ENCODE measurements at regions of chr5 and their contacts with region 1.

Region 1: DNA sequence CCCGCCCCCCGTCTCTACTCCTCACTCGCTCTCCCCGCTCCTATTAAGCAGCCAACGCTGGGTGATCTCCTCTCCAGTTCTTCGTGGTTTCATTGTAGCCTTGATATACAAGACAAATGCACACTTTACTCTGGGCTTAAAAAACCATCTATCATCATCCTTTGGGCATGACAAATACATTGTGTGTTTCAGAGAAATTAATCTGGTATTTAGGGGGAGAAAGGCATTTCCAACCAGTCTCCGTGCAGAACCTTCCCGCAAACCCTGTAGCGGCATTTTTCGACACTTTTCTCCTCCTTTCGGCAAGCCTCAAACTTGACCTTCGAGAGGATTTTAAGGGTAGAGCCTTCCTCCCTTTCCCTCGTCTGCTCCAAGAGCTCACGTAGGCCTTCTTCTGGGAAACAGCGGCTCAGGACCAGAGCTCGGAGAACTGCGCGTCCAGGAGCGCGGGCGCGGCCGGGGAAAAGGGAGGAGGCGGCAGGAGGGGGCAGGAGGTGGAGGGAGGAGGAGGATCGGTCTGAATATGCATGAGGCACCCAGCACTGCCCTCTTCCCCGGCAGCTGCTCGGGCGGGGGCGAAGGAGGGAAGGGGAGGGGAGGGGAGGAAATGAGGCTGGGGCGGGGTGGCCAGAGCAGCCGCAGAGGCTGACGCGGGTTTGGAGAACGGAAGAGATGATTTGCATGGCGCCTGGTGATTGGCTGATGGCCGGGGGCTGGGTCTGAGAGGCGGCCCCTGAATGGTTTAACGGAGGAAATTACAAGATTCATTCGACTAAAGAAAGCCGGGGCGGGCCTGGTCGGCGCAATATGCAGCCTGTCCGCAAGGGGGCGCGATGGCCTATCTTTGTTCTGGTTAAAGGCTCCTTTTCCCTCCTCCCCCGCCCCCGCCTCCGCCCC is 127.5 kb downstream of the TMEM161B start:
- DNase-seq: peak; percentile 90 to 95
- ATAC-seq: peak; percentile 86 to 95 (median 92)
- H3K4me3 ChIP-seq: peak overlapping the region; percentile 45
- H3K4me3 Mint-ChIP-seq: no peak overlapping the region
- H3K27ac ChIP-seq: no peak overlapping the region
- H3K27ac Mint-ChIP-seq: no peak overlapping the region
- H3K4me1 ChIP-seq: peaks cover 50% of the 10 kb centered on the region
- H3K4me1 Mint-ChIP-seq: peaks cover 15 to 19% of the 10 kb centered on the region in 2 donors
- H3K27me3 ChIP-seq: peaks cover 61% of the 10 kb centered on the region
- H3K27me3 Mint-ChIP-seq: peaks cover 17 to 19% of the 10 kb centered on the region in 2 donors
- CTCF ChIP-seq: peak; percentile 68

Region 2: GRCh38 chr5:87412630-87413342 is 728.3 kb before region 1 on chr5 and contains the start of gene CCNH:
- intact Hi-C with region 1: loop called (anchors 10 kb)
- DNase-seq: peak; percentile 91 to 99
- ATAC-seq: peak; percentile 93 to 99 (median 96)
- H3K4me3 ChIP-seq: peak within 1 kb of the TSS; percentile 94
- H3K4me3 Mint-ChIP-seq: peak within 1 kb of the TSS; percentile 97
- H3K27ac ChIP-seq: peak within 1 kb of the TSS; percentile 97
- H3K27ac Mint-ChIP-seq: peak within 1 kb of the TSS; percentile 90 to 99
- H3K4me1 ChIP-seq: peaks cover 6% of the 10 kb centered on the region
- H3K4me1 Mint-ChIP-seq: peaks cover 40 to 44% of the 10 kb centered on the region in 2 donors
- H3K27me3 ChIP-seq: no peaks in the 10 kb centered on the region
- H3K27me3 Mint-ChIP-seq: peaks cover 10 to 25% of the 10 kb centered on the region in 2 donors
- CTCF ChIP-seq: no peak
- total RNA-seq, gene CCNH: 171 to 305 (median 268) TPM

Region 3: GRCh38 chr5:88203981-88204750 is 63.1 kb after region 1 on chr5:
- intact Hi-C with region 1: loop called (anchors 1 kb)
- DNase-seq: peak; percentile 51 to 80
- ATAC-seq: peak; percentile 92 to 95 (median 94)
- H3K4me3 ChIP-seq: peak overlapping the region; percentile 1
- H3K4me3 Mint-ChIP-seq: peak overlapping the region; percentile 83
- H3K27ac ChIP-seq: peak overlapping the region; percentile 78
- H3K27ac Mint-ChIP-seq: peak overlapping the region; percentile 85 to 90
- H3K4me1 ChIP-seq: peaks cover 7% of the 10 kb centered on the region
- H3K4me1 Mint-ChIP-seq: peaks cover 14% of the 10 kb centered on the region in 2 donors
- H3K27me3 ChIP-seq: no peaks in the 10 kb centered on the region
- H3K27me3 Mint-ChIP-seq: no peaks in the 10 kb centered on the region
- CTCF ChIP-seq: no peak

Region 4: GRCh38 chr5:88251048-88251711 is 110.1 kb after region 1 on chr5:
- intact Hi-C with region 1: loop called (anchors 5 kb)
- DNase-seq: peak in 1 of 2 donors; percentile 30
- ATAC-seq: peak; percentile 69 to 92 (median 88)
- H3K4me3 ChIP-seq: no peak overlapping the region
- H3K4me3 Mint-ChIP-seq: no peak overlapping the region
- H3K27ac ChIP-seq: no peak overlapping the region
- H3K27ac Mint-ChIP-seq: peak overlapping the region; percentile 73 to 87
- H3K4me1 ChIP-seq: peaks cover 3% of the 10 kb centered on the region
- H3K4me1 Mint-ChIP-seq: peaks cover 57 to 67% of the 10 kb centered on the region in 2 donors
- H3K27me3 ChIP-seq: no peaks in the 10 kb centered on the region
- H3K27me3 Mint-ChIP-seq: no peaks in the 10 kb centered on the region
- CTCF ChIP-seq: no peak

Region 5: GRCh38 chr5:88268385-88269184 is 127.5 kb after region 1 on chr5 and contains the start of gene TMEM161B:
- intact Hi-C with region 1: loop called (anchors 1 kb)
- DNase-seq: peak; percentile 89 to 99
- ATAC-seq: peak; percentile 96 to 100 (median 97)
- H3K4me3 ChIP-seq: peak within 1 kb of the TSS; percentile 55
- H3K4me3 Mint-ChIP-seq: peak within 1 kb of the TSS; percentile 96
- H3K27ac ChIP-seq: peak within 1 kb of the TSS; percentile 89
- H3K27ac Mint-ChIP-seq: peak within 1 kb of the TSS; percentile 90 to 97
- H3K4me1 ChIP-seq: peaks cover 9% of the 10 kb centered on the region
- H3K4me1 Mint-ChIP-seq: peaks cover 34 to 56% of the 10 kb centered on the region in 2 donors
- H3K27me3 ChIP-seq: no peaks in the 10 kb centered on the region
- H3K27me3 Mint-ChIP-seq: no peaks in the 10 kb centered on the region
- CTCF ChIP-seq: no peak
- total RNA-seq, gene TMEM161B: 29.8 to 33.9 (median 33.2) TPM

Region 6: GRCh38 chr5:88502179-88503040 is 361.3 kb after region 1 on chr5:
- intact Hi-C with region 1: loop called (anchors 1 kb)
- DNase-seq: peak in 1 of 2 donors; percentile 56
- ATAC-seq: peak; percentile 66 to 89 (median 87)
- H3K4me3 ChIP-seq: peak overlapping the region; percentile 54
- H3K4me3 Mint-ChIP-seq: peak overlapping the region; percentile 89
- H3K27ac ChIP-seq: peak overlapping the region; percentile 59
- H3K27ac Mint-ChIP-seq: peak overlapping the region; percentile 60 to 77
- H3K4me1 ChIP-seq: peaks cover 2% of the 10 kb centered on the region
- H3K4me1 Mint-ChIP-seq: peaks cover 12 to 15% of the 10 kb centered on the region in 2 donors
- H3K27me3 ChIP-seq: no peaks in the 10 kb centered on the region
- H3K27me3 Mint-ChIP-seq: peaks cover 9 to 15% of the 10 kb centered on the region in 2 donors
- CTCF ChIP-seq: no peak

Region 7: GRCh38 chr5:88680253-88681132 is 539.4 kb after region 1 on chr5:
- intact Hi-C with region 1: loop called (anchors 5 kb)
- DNase-seq: peak; percentile 82 to 85
- ATAC-seq: peak; percentile 87 to 90 (median 89)
- H3K4me3 ChIP-seq: peak overlapping the region; percentile 11
- H3K4me3 Mint-ChIP-seq: peak overlapping the region; percentile 40
- H3K27ac ChIP-seq: no peak overlapping the region
- H3K27ac Mint-ChIP-seq: peak overlapping the region in 1 of 2 donors; percentile 20
- H3K4me1 ChIP-seq: peaks cover 25% of the 10 kb centered on the region
- H3K4me1 Mint-ChIP-seq: peaks cover 18 to 32% of the 10 kb centered on the region in 2 donors
- H3K27me3 ChIP-seq: peaks cover 92% of the 10 kb centered on the region
- H3K27me3 Mint-ChIP-seq: peaks cover 79 to 86% of the 10 kb centered on the region in 2 donors
- CTCF ChIP-seq: peak; percentile 97

Measured in natural killer cell (primary cell).